OCI-LY7 (cell line): ENCODE measurements at regions of chr6 and their contacts with region 1.

Region 1: GRCh38 chr6:44655412-44656342 is 268.2 kb downstream of the CDC5L start:
- DNase-seq: peak; percentile 36
- H3K4me3 ChIP-seq: no peak overlapping the region
- H3K27ac ChIP-seq: no peak overlapping the region
- H3K4me1 ChIP-seq: no peaks in the 10 kb centered on the region
- CTCF ChIP-seq: peak; percentile 93

Region 2: DNA sequence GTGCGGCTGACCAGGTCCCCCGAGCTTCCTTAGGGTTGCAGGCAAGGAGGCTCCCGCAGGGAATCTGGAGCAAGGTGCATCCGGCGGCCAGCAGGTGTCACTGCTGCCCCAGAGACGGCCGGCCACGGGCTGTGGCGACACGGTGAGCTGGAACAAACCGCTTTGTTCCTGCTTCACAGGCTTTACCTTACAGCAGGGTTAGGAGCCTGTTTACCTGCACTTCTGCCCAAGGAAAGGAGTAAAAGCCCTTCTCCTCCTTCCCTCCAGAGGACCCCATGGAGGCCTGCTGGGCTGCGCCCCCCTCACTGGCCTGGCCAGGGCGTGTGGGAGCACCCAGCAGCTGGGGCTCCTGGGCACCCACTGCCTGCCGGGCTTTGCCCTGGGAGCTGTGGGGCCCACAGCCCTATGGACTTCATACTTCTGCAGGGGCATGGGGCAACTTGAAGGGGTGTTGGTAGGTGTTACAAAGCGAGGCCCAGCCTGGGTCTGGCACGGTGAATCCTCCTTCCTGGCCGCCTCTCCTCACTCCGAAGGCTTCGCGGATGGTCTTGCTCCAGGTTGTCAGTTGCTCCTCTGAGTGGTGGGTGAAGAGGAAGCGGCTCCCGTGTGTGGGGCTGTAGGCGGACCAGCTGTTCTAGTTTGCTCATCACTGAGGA is 179.8 kb before region 1 on chr6:
- CTCF ChIA-PET with region 1: no interaction called
- POLR2A ChIA-PET with region 1: no interaction called
- intact Hi-C with region 1: loop called (anchors 10 kb)
- DNase-seq: peak; percentile 54
- H3K4me3 ChIP-seq: no peak overlapping the region
- H3K27ac ChIP-seq: no peak overlapping the region
- H3K4me1 ChIP-seq: no peaks in the 10 kb centered on the region
- CTCF ChIP-seq: peak; percentile 83

Region 3: DNA sequence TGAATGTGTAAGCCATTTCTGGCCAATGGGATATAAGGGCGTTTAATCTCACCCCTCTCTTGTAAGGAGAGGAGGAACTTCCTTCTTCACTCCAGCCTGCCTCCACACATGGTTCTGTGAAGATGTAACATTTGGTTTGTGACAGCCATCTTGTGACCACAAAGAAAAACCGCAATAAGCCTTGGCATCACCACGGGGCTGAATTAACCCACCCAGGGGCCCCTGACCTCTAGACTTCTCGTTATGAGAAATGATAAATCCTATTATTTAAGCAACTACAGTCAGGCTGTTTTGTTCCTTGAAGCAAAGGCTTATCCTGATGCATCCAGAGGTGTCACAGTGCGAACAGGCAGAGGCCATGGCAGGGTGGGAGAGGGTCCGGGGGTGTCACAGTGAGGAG is 128.5 kb before region 1 on chr6:
- CTCF ChIA-PET with region 1: no interaction called
- POLR2A ChIA-PET with region 1: no interaction called
- intact Hi-C with region 1: no loop called
- DNase-seq: no peak
- H3K4me3 ChIP-seq: no peak overlapping the region
- H3K27ac ChIP-seq: no peak overlapping the region
- H3K4me1 ChIP-seq: no peaks in the 10 kb centered on the region
- CTCF ChIP-seq: no peak